Heart right ventricle (tissue), 16 donors: ENCODE measurements at regions of chr13 and their contacts with region 1.

Region 1: GRCh38 chr13:101144808-101145419 is 271.4 kb downstream of the NALCN start:
- DNase-seq: no peak
- ATAC-seq: no peak
- H3K4me3 ChIP-seq: no peak overlapping the region
- H3K27ac ChIP-seq: no peak overlapping the region
- H3K4me1 ChIP-seq: no peaks in the 10 kb centered on the region
- H3K27me3 ChIP-seq: peaks cover 0 to 17% (median 4%) of the 10 kb centered on the region in 7 donors
- CTCF ChIP-seq: peak; percentile 37 to 81 (median 75)

Region 2: DNA sequence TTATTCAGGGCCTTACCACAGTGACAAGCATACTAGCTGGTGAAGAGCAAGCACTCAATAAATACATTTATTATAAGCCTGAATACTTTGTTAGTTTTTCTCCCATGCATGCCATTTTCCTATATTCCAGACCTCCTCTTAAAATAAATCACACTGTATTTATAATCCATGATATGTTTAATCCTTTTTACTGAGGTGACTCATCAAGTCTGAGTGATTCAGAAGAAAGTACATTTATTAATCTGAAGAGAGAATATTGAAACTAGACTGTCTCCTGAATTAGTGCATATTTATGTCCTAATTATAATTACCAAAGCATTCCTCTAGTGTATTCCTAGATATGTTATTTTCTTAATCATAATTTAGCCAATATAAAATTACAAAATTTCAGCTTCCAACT is 51.9 kb before region 1 on chr13:
- intact Hi-C with region 1: no loop called
- DNase-seq: no peak
- ATAC-seq: no peak
- H3K4me3 ChIP-seq: no peak overlapping the region
- H3K27ac ChIP-seq: no peak overlapping the region
- H3K4me1 ChIP-seq: no peaks in the 10 kb centered on the region
- H3K27me3 ChIP-seq: no peaks in the 10 kb centered on the region
- CTCF ChIP-seq: no peak

Region 3: GRCh38 chr13:101170306-101170705 is 25.4 kb after region 1 on chr13:
- intact Hi-C with region 1: no loop called
- DNase-seq: no peak
- ATAC-seq: no peak
- H3K4me3 ChIP-seq: no peak overlapping the region
- H3K27ac ChIP-seq: no peak overlapping the region
- H3K4me1 ChIP-seq: no peaks in the 10 kb centered on the region
- H3K27me3 ChIP-seq: no peaks in the 10 kb centered on the region
- CTCF ChIP-seq: no peak

Region 4: GRCh38 chr13:101474419-101474957 is 329.6 kb after region 1 on chr13:
- intact Hi-C with region 1: loop called in 3 of 10 experiments (anchors 10 kb)
- DNase-seq: no peak
- ATAC-seq: peak in 2 of 8 donors; percentile 27 to 46
- H3K4me3 ChIP-seq: no peak overlapping the region
- H3K27ac ChIP-seq: no peak overlapping the region
- H3K4me1 ChIP-seq: peaks cover 0 to 12% (median 0%) of the 10 kb centered on the region in 9 donors
- H3K27me3 ChIP-seq: no peaks in the 10 kb centered on the region
- CTCF ChIP-seq: peak in 4 of 9 donors; percentile 19 to 40 (median 34)

Region 5: DNA sequence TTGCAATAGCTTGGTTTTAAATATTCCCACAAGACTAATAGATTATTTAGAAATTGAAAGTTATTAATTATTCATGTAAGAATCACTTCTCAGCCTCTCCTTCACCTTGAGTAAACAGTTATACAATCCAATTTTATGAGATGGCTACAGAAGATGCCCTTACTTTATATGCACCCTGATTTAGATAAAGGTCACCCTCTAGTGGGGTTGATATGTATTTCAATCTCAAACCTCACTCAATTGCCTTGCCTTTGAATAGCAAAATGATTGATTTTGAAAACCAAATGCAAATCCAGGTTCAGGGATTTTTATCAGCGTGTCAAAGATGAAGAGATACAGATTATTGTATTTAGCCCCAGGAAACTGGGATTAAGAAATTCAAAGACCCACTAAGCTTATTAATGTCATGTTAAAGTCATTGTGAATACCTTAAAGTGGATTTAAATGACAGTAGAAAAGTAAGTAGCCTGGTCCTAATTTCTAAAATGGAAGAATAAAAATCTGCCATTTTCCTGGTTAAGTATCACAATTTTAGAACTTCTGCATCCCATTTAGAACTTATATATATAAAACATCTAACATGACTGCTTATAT is 612.6 kb after region 1 on chr13:
- intact Hi-C with region 1: loop called in 5 of 10 experiments (anchors 5 to 10 kb)
- DNase-seq: no peak
- ATAC-seq: peak in 4 of 8 donors; percentile 34 to 68 (median 58)
- H3K4me3 ChIP-seq: no peak overlapping the region
- H3K27ac ChIP-seq: no peak overlapping the region
- H3K4me1 ChIP-seq: no peaks in the 10 kb centered on the region
- H3K27me3 ChIP-seq: no peaks in the 10 kb centered on the region
- CTCF ChIP-seq: peak in 8 of 9 donors; percentile 21 to 64 (median 50)

Region 6: GRCh38 chr13:101763191-101763590 is 618.3 kb after region 1 on chr13:
- intact Hi-C with region 1: loop called in 5 of 10 experiments (anchors 5 to 10 kb)
- DNase-seq: no peak
- ATAC-seq: no peak
- H3K4me3 ChIP-seq: no peak overlapping the region
- H3K27ac ChIP-seq: no peak overlapping the region
- H3K4me1 ChIP-seq: no peaks in the 10 kb centered on the region
- H3K27me3 ChIP-seq: no peaks in the 10 kb centered on the region
- CTCF ChIP-seq: no peak

Region 7: GRCh38 chr13:101916108-101916757 is 771.3 kb after region 1 on chr13:
- intact Hi-C with region 1: loop called in 2 of 10 experiments (anchors 10 kb)
- DNase-seq: peak in 1 of 2 donors; percentile 40
- ATAC-seq: peak; percentile 25 to 92 (median 80)
- H3K4me3 ChIP-seq: peak overlapping the region; percentile 13 to 57 (median 48)
- H3K27ac ChIP-seq: no peak overlapping the region
- H3K4me1 ChIP-seq: peaks cover 0 to 20% (median 6%) of the 10 kb centered on the region in 9 donors
- H3K27me3 ChIP-seq: peaks cover 0 to 87% (median 68%) of the 10 kb centered on the region in 7 donors
- CTCF ChIP-seq: peak in 7 of 9 donors; percentile 29 to 60 (median 51)

Region 8: DNA sequence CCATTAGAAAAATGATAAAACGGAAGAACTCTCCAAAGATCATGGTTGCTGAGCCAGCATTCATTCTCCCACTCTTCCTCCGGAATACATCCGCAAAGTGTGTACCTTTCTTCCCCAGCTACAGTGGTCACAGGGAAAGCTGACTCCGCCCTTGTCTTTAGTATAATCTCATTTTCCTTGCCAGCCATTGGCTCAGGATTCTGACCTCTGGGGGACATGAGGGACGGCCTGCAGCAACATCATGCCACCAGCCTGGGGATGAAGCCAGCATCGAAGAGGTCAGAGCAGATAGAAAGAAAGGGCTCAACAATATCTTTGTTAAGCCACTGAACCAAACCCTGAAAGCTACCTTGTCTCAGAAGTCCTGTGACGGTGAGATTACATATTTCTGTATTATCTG is 1405.6 kb after region 1 on chr13:
- intact Hi-C with region 1: loop called in 4 of 10 experiments (anchors 5 to 10 kb)
- DNase-seq: no peak
- ATAC-seq: no peak
- H3K4me3 ChIP-seq: no peak overlapping the region
- H3K27ac ChIP-seq: no peak overlapping the region
- H3K4me1 ChIP-seq: no peaks in the 10 kb centered on the region
- H3K27me3 ChIP-seq: peaks cover 0 to 6% (median 0%) of the 10 kb centered on the region in 7 donors
- CTCF ChIP-seq: no peak

Region 9: DNA sequence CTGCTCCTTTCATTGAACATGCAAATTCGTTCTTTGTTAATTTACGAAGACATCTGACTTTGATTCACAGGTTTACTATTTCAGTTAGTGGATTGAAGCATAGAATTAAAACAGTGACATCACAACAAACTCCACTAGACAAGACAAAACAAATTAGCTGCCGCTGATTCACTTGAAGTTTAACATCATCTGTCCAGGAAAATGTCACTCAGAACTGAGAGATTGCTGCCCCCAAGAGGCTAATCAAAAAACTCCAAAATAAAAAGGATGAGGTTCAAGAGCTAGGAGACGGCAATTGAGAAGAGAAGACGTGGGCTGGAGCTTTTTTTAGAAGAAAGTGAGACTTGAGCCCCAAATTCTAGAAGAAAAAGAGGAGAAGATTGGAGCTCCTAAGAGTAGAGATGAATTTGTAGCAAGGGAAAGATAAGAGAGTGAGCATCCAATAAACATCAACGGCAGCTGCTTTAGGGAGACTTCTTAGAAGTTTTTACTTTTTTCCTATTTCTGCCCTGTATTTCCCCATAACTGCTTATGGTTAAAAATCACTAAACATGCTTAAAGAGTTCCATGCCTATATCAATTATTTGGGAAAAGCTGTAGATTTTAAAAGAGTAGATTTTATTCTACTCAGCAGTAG is 1411.1 kb after region 1 on chr13:
- intact Hi-C with region 1: loop called in 4 of 10 experiments (anchors 5 to 10 kb)
- DNase-seq: no peak
- ATAC-seq: peak in 1 of 8 donors; percentile 44
- H3K4me3 ChIP-seq: no peak overlapping the region
- H3K27ac ChIP-seq: no peak overlapping the region
- H3K4me1 ChIP-seq: no peaks in the 10 kb centered on the region
- H3K27me3 ChIP-seq: no peaks in the 10 kb centered on the region
- CTCF ChIP-seq: peak in 7 of 9 donors; percentile 45 to 65 (median 57)